HepG2 (cell line): ENCODE measurements at regions of chr10 and their contacts with region 1.

Region 1: DNA sequence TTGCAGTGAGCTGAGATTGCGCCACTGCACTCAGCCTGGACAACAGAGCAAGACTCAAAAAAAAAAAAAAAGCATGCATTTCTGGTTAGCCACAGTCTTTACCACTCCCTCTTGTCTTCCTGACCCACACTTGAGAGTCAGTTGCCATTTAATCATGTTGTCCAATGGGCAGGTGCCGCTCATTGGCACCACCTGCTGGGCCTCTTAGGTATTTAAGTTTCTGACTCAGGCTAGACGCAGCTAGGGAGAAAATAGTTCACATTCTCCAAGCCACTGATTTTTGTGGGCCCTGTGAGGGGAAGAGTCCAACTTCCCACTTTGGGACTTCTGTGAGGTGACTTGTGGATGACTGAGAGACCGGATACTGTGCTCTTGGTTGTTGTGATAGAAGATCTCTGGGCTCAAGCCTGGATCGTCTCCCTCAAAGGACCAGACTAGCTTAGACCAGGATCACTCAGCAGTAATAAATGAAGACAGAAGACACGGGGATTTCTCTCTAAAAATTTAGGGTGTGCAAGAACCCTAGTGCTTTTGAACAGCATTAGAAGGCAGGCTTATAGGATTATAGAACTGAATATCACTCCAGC is 26.8 kb upstream of the SORCS3 start:
- DNase-seq: peak; percentile 17
- ATAC-seq: peak; percentile 77
- H3K4me3 ChIP-seq: no peak overlapping the region
- H3K27ac ChIP-seq: no peak overlapping the region
- H3K4me1 ChIP-seq: no peaks in the 10 kb centered on the region
- H3K27me3 ChIP-seq: peaks cover 0 to 5% of the 10 kb centered on the region in 2 experiments; a peak in 1 of 5 replicates
- CTCF ChIP-seq: peak; percentile 56
- EP300 ChIP-seq: no peak
- POLR2A ChIP-seq: no peak
- RAD21 ChIP-seq: no peak

Region 2: DNA sequence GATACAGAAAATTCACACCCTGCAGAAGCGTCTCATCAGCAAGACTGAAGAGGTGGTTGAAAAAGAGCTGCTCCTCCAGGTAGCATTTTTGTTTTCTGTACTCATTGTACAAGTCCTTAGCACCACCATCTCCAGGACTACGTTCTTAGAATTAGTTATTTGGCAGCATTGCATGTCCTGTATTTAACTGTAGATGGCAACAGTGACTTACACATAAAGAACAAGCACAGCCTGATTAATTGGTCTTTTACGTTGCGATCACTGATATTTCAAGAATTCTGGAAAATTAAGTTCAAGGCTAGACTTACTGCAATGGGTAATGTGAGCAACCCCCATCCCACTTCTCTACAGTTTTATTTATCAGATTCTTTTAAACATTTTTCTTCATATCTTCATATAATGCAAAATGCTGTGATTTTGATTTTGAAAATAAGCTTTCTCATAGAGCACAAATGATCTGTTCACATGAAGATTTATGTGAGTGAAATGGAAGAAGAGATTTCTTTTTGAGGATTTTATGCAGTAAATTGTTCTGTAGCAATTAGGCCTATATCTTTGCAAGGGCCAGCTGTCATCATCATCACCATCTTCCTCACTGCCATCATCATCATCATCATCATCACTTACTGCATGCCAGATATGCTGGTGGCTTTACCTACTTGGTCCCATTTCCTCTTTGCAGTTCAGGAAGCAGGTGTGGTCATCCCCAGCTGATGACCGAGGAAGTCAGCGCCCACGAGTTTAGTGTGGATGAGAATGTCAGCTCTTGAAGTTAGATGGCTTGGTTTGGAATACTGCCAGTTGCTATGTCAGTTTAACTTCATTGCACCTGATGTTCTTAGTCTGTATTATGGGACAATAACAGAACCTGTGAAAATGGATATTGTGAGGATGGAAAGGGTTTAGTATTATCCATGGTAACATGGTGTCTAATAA is 207.4 kb before region 1 on chr10:
- CTCF ChIA-PET with region 1: no interaction called
- POLR2A ChIA-PET with region 1: no interaction called
- in situ Hi-C with region 1: loop called (anchors 10 kb)
- intact Hi-C with region 1: no loop called
- DNase-seq: peak; percentile 17
- ATAC-seq: peak; percentile 49; the same call in 1 of the 3 replicates
- H3K4me3 ChIP-seq: no peak overlapping the region
- H3K27ac ChIP-seq: no peak overlapping the region
- H3K4me1 ChIP-seq: no peaks in the 10 kb centered on the region
- H3K27me3 ChIP-seq: peaks cover 0 to 11% of the 10 kb centered on the region in 2 experiments; a peak in 2 of 5 replicates
- CTCF ChIP-seq: peak; percentile 56
- EP300 ChIP-seq: no peak
- POLR2A ChIP-seq: no peak
- RAD21 ChIP-seq: no peak

Region 3: GRCh38 chr10:104580774-104581675 is 33.3 kb before region 1 on chr10:
- CTCF ChIA-PET with region 1: interaction called, 5 read pairs
- POLR2A ChIA-PET with region 1: no interaction called
- in situ Hi-C with region 1: loop called (anchors 5 kb)
- intact Hi-C with region 1: loop called (anchors 2 kb)
- DNase-seq: peak; percentile 43
- ATAC-seq: peak; percentile 95
- H3K4me3 ChIP-seq: no peak overlapping the region
- H3K27ac ChIP-seq: no peak overlapping the region
- H3K4me1 ChIP-seq: 0 out of 2 replicates have a peak, but pooled peaks cover 6% of the 10 kb centered on the region
- H3K27me3 ChIP-seq: peaks cover 0 to 25% of the 10 kb centered on the region in 2 experiments; a peak in 2 of 5 replicates
- CTCF ChIP-seq: peak; percentile 82
- EP300 ChIP-seq: no peak
- POLR2A ChIP-seq: no peak
- RAD21 ChIP-seq: no peak